HEK293 (cell line): ENCODE measurements at regions of chr15 and their contacts with region 1.

Region 1: GRCh38 chr15:43769584-43770228 is 7.1 kb downstream of the ELL3 start:
- H3K4me3 ChIP-seq: no peak overlapping the region
- H3K27ac ChIP-seq: no peak overlapping the region
- H3K4me1 ChIP-seq: no peaks in the 10 kb centered on the region
- CTCF ChIP-seq: 0 out of 2 replicates have a peak, but pooled peaks have one; percentile 37

Region 2: GRCh38 chr15:43440721-43441281 is 328.9 kb before region 1 on chr15:
- CTCF ChIA-PET with region 1: interaction called, 10 read pairs
- POLR2A ChIA-PET with region 1: no interaction called
- H3K4me3 ChIP-seq: no peak overlapping the region
- H3K27ac ChIP-seq: no peak overlapping the region
- H3K4me1 ChIP-seq: no peaks in the 10 kb centered on the region
- CTCF ChIP-seq: 0 out of 2 replicates have a peak, but pooled peaks have one; percentile 32

Region 3: GRCh38 chr15:43749690-43750345 is 19.9 kb before region 1 on chr15:
- CTCF ChIA-PET with region 1: interaction called, 12 read pairs
- POLR2A ChIA-PET with region 1: no interaction called
- H3K4me3 ChIP-seq: no peak overlapping the region
- H3K27ac ChIP-seq: no peak overlapping the region
- H3K4me1 ChIP-seq: peaks cover 8% of the 10 kb centered on the region
- CTCF ChIP-seq: no peak

Region 4: GRCh38 chr15:43930079-43930478 is 160.4 kb after region 1 on chr15:
- CTCF ChIA-PET with region 1: no interaction called
- POLR2A ChIA-PET with region 1: no interaction called
- H3K4me3 ChIP-seq: no peak overlapping the region
- H3K27ac ChIP-seq: peak overlapping the region; percentile 20; the same call in 1 of the 2 replicates
- H3K4me1 ChIP-seq: peaks cover 11% of the 10 kb centered on the region; the same call in 1 of the 2 replicates
- CTCF ChIP-seq: no peak

Region 5: GRCh38 chr15:44015545-44016305 is 246.0 kb after region 1 on chr15:
- CTCF ChIA-PET with region 1: no interaction called
- POLR2A ChIA-PET with region 1: no interaction called
- H3K4me3 ChIP-seq: no peak overlapping the region
- H3K27ac ChIP-seq: no peak overlapping the region
- H3K4me1 ChIP-seq: peaks cover 3% of the 10 kb centered on the region; the same call in 1 of the 2 replicates
- CTCF ChIP-seq: no peak

Region 6: GRCh38 chr15:44045217-44045616 is 275.5 kb after region 1 on chr15:
- CTCF ChIA-PET with region 1: no interaction called
- POLR2A ChIA-PET with region 1: no interaction called
- H3K4me3 ChIP-seq: no peak overlapping the region
- H3K27ac ChIP-seq: no peak overlapping the region
- H3K4me1 ChIP-seq: no peaks in the 10 kb centered on the region
- CTCF ChIP-seq: no peak

Region 7: GRCh38 chr15:44397869-44398268 is 628.2 kb after region 1 on chr15:
- CTCF ChIA-PET with region 1: no interaction called
- POLR2A ChIA-PET with region 1: no interaction called
- H3K4me3 ChIP-seq: no peak overlapping the region
- H3K27ac ChIP-seq: no peak overlapping the region
- H3K4me1 ChIP-seq: no peaks in the 10 kb centered on the region
- CTCF ChIP-seq: no peak